Heart right ventricle (tissue), 16 donors: ENCODE measurements at regions of chr1 and their contacts with region 1.

Region 1: GRCh38 chr1:24070821-24071393 is 41.0 kb downstream of the MYOM3 start:
- DNase-seq: peak; percentile 60 to 85
- ATAC-seq: peak; percentile 43 to 82 (median 73)
- H3K4me3 ChIP-seq: no peak overlapping the region
- H3K27ac ChIP-seq: peak overlapping the region in 5 of 10 donors; percentile 33 to 42 (median 37)
- H3K4me1 ChIP-seq: peaks cover 0 to 31% (median 11%) of the 10 kb centered on the region in 9 donors
- H3K27me3 ChIP-seq: no peaks in the 10 kb centered on the region
- CTCF ChIP-seq: peak; percentile 80 to 90 (median 88)

Region 2: DNA sequence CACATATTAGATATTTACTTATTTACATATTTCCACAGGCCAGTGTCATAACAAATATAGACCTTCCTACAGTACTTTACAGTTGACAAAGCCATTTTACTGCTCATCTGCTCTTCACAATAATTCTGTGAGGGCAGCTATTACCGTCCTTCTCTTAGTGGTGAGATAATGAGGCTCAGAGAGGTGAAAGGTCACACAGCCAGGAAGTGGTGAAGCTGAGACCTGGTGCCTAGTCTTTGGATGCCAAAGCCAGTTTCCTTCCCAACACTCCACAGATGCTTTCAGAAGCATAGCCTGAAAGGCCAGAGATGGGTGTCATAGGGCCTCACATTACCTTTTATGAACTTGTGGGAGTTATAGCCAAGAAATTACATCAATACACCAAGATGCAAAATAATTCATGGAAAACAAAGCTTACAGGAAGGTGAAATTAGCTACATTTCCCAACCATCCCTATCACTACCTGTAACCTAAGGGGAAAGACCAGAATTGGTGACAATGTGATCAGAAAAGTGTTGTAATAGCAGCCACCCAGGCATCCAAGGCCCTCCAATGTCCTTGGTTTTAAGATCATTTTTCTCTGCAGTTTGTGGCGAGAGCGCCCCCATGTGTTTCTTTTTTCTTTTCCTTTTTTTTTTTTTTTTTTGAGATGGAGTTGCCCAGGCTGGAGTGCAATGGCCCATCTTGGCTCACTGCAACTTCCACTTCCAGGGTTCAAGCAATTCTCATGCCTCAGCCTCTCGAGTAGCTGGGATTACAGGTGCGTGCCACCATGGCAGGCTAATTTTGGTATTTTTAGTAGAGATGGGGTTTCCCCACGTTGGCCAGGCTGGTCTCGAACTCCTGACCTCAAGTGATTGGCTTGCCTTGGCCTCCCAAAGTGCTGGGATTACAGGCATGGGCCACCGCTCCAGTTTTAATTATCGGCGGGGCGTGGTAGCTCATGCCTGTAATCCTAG is 405.8 kb before region 1 on chr1:
- intact Hi-C with region 1: no loop called
- DNase-seq: no peak
- ATAC-seq: no peak
- H3K4me3 ChIP-seq: no peak overlapping the region
- H3K27ac ChIP-seq: no peak overlapping the region
- H3K4me1 ChIP-seq: no peaks in the 10 kb centered on the region
- H3K27me3 ChIP-seq: no peaks in the 10 kb centered on the region
- CTCF ChIP-seq: peak in 7 of 9 donors; percentile 26 to 52 (median 32)

Region 3: GRCh38 chr1:24111996-24112779 is 41.3 kb after region 1 on chr1 and contains the start of gene MYOM3:
- intact Hi-C with region 1: loop called in 9 of 10 experiments (anchors 2 to 5 kb)
- DNase-seq: peak; percentile 69 to 75
- ATAC-seq: peak; percentile 73 to 84 (median 82)
- H3K4me3 ChIP-seq: peak within 1 kb of the TSS; percentile 14 to 59 (median 52)
- H3K27ac ChIP-seq: peak within 1 kb of the TSS; percentile 87 to 97 (median 94)
- H3K4me1 ChIP-seq: peaks cover 5 to 42% (median 23%) of the 10 kb centered on the region in 9 donors
- H3K27me3 ChIP-seq: peaks cover 0 to 24% (median 7%) of the 10 kb centered on the region in 7 donors
- CTCF ChIP-seq: peak; percentile 14 to 74 (median 52)
- total RNA-seq, gene MYOM3: 285 to 428 (median 328) TPM